ENCODE measurements at regions of chr3 and their contacts with region 1.

Region 1: GRCh38 chr3:68904064-68904463 is 28.3 kb downstream of the TAFA4 start:
- DNase-seq: no peak
- ATAC-seq: no peak
- H3K4me3 ChIP-seq: no peak overlapping the region
- H3K4me3 Mint-ChIP-seq: no peak overlapping the region
- H3K27ac ChIP-seq: no peak overlapping the region
- H3K27ac Mint-ChIP-seq: no peak overlapping the region
- H3K4me1 ChIP-seq: no peaks in the 10 kb centered on the region
- H3K4me1 Mint-ChIP-seq: no peaks in the 10 kb centered on the region
- H3K27me3 ChIP-seq: peaks cover 0 to 19% of the 10 kb centered on the region in 2 experiments
- H3K27me3 Mint-ChIP-seq: peaks cover 44% of the 10 kb centered on the region
- CTCF ChIP-seq: no peak

Region 2: GRCh38 chr3:68915973-68916372 is 11.9 kb after region 1 on chr3:
- CTCF ChIA-PET with region 1: no interaction called
- POLR2A ChIA-PET with region 1: no interaction called
- intact Hi-C with region 1: loop called in 1 of 2 experiments (anchors 1 kb)
- DNase-seq: no peak
- ATAC-seq: no peak
- H3K4me3 ChIP-seq: no peak overlapping the region
- H3K4me3 Mint-ChIP-seq: no peak overlapping the region
- H3K27ac ChIP-seq: no peak overlapping the region
- H3K27ac Mint-ChIP-seq: no peak overlapping the region
- H3K4me1 ChIP-seq: no peaks in the 10 kb centered on the region
- H3K4me1 Mint-ChIP-seq: no peaks in the 10 kb centered on the region
- H3K27me3 ChIP-seq: peaks cover 7 to 13% of the 10 kb centered on the region in 2 experiments
- H3K27me3 Mint-ChIP-seq: peaks cover 71% of the 10 kb centered on the region
- CTCF ChIP-seq: no peak

Measured in CD4-positive, alpha-beta T cell (primary cell).